WTC11 (cell line): ENCODE measurements at regions of chr14 and their contacts with region 1.

Region 1: GRCh38 chr14:65019944-65020566 is 33.4 kb downstream of the FNTB start:
- DNase-seq: no peak
- ATAC-seq: peak; percentile 87
- H3K4me3 Mint-ChIP-seq: no peak overlapping the region
- H3K27ac Mint-ChIP-seq: no peak overlapping the region
- H3K4me1 Mint-ChIP-seq: peaks cover 3% of the 10 kb centered on the region; the same call in 1 of the 2 replicates
- H3K27me3 Mint-ChIP-seq: no peaks in the 10 kb centered on the region
- CTCF ChIP-seq: 0 out of 2 replicates have a peak, but pooled peaks have one; percentile 20

Region 2: DNA sequence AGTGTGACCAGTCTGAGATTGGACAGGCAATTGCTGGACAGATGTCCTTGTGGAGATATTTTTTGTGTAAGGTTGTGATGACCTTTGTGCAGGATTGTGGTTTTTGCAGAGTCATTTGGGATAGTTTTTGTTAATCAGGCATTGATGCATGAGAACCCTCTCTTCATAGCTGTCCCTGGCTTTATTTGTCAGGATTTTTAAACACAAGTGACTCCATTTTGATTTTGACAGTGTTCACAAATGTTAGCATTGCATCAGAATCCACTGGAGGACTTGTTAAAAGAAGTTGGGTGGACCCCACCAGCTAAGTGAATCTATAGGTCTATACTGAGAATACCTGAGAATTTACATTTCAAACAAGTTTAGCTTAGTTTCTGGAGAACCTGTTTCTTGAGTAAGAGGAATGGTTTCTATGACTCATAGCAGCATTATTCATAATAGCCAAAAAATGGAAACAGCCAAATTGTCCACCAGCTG is 21.6 kb before region 1 on chr14:
- CTCF ChIA-PET with region 1: interaction called, 18 read pairs
- POLR2A ChIA-PET with region 1: no interaction called
- DNase-seq: no peak
- ATAC-seq: no peak
- H3K4me3 Mint-ChIP-seq: no peak overlapping the region
- H3K27ac Mint-ChIP-seq: no peak overlapping the region
- H3K4me1 Mint-ChIP-seq: peaks cover 38% of the 10 kb centered on the region
- H3K27me3 Mint-ChIP-seq: no peaks in the 10 kb centered on the region
- CTCF ChIP-seq: no peak

Region 3: GRCh38 chr14:65065700-65066099 is 45.6 kb after region 1 on chr14:
- CTCF ChIA-PET with region 1: no interaction called
- POLR2A ChIA-PET with region 1: no interaction called
- DNase-seq: no peak
- ATAC-seq: no peak
- H3K4me3 Mint-ChIP-seq: no peak overlapping the region
- H3K27ac Mint-ChIP-seq: no peak overlapping the region
- H3K4me1 Mint-ChIP-seq: no peaks in the 10 kb centered on the region
- H3K27me3 Mint-ChIP-seq: no peaks in the 10 kb centered on the region
- CTCF ChIP-seq: no peak